ENCODE measurements at regions of chr1 and their contacts with region 1.

Region 1: DNA sequence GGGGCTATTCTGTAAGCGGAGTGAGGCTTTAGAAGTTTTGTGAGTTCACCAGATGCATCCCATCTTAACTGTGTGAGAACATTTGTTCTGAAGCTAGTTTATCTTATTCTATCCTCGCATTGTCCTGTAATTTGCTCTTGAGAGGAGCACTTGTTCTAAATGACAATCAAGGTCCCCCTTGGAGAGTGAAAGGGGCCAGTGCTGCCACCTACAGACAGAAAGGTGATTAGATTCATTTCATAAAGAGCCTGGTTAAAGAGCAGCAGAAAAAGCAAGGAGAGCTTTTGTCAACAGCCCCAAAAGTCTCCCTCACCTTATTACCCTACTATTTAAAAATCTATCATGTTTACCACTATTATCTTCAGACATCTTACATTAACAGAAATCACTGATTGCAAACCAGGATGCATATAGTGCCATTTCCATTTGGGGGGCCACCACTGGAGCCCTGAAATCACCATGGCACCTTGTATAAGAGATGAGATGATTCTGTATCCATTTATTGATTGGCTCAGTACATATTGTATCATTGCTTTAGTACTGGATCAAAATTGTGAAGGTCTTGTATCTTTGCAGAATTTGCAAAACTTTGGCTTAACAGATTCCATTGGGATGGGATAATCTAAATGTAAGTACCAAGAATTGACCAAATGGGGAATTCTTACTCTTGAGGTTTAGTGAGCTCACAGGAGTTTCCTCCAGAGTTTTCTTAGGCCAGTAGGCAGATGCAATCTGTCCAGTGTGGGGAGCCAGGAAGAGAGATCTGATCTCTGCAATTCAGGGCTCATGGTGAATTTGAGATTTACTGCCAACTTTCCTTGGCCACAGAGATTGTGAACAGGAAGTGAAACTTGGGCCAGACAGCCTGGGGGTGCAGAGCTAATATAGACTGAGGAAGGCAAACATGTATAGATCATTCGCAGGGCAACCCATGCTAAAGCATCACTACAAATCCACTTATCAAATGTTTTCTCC is 64.3 kb upstream of the TRABD2B start:
- DNase-seq: no peak
- H3K4me3 ChIP-seq: no peak overlapping the region
- H3K27ac ChIP-seq: no peak overlapping the region
- H3K27me3 ChIP-seq: no peaks in the 10 kb centered on the region
- CTCF ChIP-seq: peak; percentile 61

Region 2: DNA sequence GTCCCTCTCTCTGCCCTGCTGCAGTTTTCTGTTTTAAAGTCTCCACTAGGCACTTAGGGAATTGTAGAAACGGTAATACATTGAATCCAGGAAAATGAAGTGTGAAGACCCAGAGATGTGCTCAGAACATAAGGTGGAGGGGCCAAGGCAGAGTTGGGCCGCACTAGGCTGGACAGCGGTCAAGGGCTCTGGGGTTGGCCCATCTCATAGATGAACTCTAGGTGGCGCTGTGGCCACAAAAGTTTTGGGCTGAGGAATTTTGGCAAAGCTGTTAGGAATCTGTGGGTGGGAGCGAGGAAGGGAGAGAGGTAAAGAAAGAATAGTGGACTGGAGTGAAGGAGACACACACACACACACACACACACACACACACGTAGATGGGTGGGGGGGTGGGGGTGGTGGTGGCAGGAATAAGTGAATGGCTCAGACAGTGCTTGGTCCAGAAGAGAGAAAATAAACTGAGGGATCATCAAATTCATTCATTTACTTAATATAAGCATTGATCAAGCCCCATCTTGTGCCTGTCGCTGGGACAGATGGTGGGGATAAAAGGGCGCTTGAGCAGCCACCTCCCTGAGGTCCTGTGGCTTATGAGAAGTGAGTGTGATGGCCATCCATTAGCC is 322.8 kb before region 1 on chr1:
- CTCF ChIA-PET with region 1: interaction called, 13 read pairs
- POLR2A ChIA-PET with region 1: no interaction called
- DNase-seq: no peak
- H3K4me3 ChIP-seq: no peak overlapping the region
- H3K27ac ChIP-seq: no peak overlapping the region
- H3K27me3 ChIP-seq: no peaks in the 10 kb centered on the region
- CTCF ChIP-seq: peak; percentile 72

Measured in AG04450 (cell line).